CD14-positive monocyte (primary cell): ENCODE measurements at regions of chr17 and their contacts with region 1.

Region 1: GRCh38 chr17:43211480-43212402 is at the start of gene TMEM106A:
- DNase-seq: peak; percentile 47 to 94 (median 60)
- H3K4me3 ChIP-seq: peak within 1 kb of the TSS; percentile 73 to 96 (median 82)
- H3K4me3 Mint-ChIP-seq: peak within 1 kb of the TSS; percentile 98
- H3K27ac ChIP-seq: peak within 1 kb of the TSS; percentile 84 to 85
- H3K27ac Mint-ChIP-seq: peak within 1 kb of the TSS; percentile 91 to 97 (median 95)
- H3K4me1 ChIP-seq: peaks cover 29 to 36% of the 10 kb centered on the region in 2 donors
- H3K4me1 Mint-ChIP-seq: peaks cover 36% of the 10 kb centered on the region
- H3K27me3 ChIP-seq: no peaks in the 10 kb centered on the region
- H3K27me3 Mint-ChIP-seq: peaks cover 0 to 2% (median 0%) of the 10 kb centered on the region in 3 donors
- CTCF ChIP-seq: peak; percentile 25
- polyA plus RNA-seq, gene TMEM106A: 6.9 to 26.6 (median 8.0) TPM

Region 2: DNA sequence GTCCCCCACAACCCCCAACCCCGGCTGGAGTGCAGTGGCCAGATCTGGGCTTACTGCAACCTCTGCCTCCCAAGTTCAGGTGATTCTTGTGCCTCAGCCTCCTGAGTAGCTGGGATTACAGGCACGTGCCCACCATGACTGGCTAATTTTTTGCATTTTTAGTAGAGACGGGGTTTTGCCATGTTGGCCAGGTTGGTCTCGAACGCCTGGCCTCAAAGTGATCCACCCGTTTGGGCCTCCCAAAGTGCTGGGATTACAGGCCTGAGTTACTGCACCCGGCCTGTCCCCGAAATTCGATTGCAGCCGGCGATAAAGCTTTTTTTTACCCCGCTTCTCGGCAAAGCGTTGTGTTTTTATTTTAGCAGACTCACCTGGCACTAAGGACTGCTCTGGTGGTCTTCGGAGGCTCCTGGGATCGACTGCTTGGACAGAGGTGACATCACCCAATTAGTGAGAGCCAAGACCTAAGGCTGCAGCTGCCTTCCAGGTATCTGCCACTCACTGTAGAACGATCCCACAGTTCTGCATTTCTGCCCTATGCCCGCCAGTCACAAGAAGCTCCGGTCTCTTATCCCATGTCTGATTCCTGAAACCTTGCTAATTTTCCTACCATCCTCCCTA is 104.9 kb after region 1 on chr17:
- intact Hi-C with region 1: loop called in 1 of 2 experiments (anchors 5 kb)
- DNase-seq: peak in 1 of 3 donors; percentile 81
- H3K4me3 ChIP-seq: no peak overlapping the region
- H3K4me3 Mint-ChIP-seq: no peak overlapping the region
- H3K27ac ChIP-seq: no peak overlapping the region
- H3K27ac Mint-ChIP-seq: peak overlapping the region in 1 of 7 donors; percentile 46
- H3K4me1 ChIP-seq: peaks cover 0 to 7% of the 10 kb centered on the region in 2 donors
- H3K4me1 Mint-ChIP-seq: peaks cover 15% of the 10 kb centered on the region
- H3K27me3 ChIP-seq: no peaks in the 10 kb centered on the region
- H3K27me3 Mint-ChIP-seq: peaks cover 1 to 6% (median 3%) of the 10 kb centered on the region in 3 donors
- CTCF ChIP-seq: no peak